PC-3 (cell line): ENCODE measurements at regions of chr12 and their contacts with region 1.

Region 1: DNA sequence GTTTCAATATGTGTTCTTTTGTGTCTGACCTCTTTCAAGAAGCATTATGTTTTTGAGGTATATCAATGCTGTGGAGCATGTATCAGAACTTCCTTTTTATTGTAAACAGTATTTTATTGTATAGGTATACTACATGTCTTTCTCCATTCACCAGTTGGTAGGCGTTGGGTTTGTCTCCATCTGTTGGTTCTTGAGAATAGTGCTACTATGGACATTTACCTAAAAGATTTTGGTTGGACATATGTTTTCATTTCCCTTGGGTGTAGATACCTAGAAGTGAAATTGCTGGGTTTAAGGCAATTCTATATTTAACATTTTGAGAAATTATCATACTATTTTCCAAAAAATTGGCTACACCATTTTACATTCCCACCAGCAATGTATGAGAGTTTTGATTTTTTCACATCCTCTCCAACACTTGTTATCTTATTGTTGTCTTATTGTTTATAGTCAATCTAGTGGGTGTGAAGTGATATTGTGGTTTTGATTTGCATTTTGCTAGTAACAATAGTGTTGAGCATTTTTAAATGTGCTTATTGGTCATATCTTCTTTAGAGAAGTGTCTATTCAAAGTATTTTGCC is 409.2 kb downstream of the IPO8 start:
- DNase-seq: peak; percentile 59
- ATAC-seq: 0 out of 2 replicates have a peak, but pooled peaks have one; percentile 37
- H3K4me3 ChIP-seq: no peak overlapping the region
- H3K27ac ChIP-seq: no peak overlapping the region
- H3K4me1 ChIP-seq: no peaks in the 10 kb centered on the region
- H3K27me3 ChIP-seq: no peaks in the 10 kb centered on the region
- CTCF ChIP-seq: peak; percentile 68

Region 2: DNA sequence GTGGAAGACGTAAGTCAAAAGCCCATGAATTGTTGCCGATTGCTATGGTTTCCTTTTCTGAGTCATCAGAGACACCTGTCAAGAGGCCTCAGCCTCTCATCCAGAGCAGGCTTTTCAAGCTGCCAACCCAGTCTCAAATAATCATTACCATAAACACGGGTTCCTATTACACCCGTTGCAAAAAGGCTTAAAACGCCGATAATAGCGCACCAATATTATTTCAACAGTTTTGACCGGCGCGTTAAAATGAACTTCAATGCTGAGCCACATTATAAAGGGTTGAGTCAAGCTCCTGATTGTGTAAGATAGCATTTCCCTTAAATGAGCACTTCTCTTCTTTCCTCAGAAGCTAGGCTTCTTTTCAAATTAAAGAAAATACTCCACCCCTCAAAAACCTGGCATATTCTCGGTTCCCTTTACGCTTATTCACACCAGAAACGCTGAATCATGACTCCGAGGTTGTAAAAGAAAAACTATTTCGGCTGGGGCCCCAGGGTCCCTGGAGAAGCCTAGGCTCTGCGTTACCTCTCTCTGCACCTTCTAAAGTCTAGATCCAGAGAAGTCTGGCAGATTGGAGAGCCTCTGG is 504.1 kb before region 1 on chr12:
- CTCF ChIA-PET with region 1: no interaction called
- POLR2A ChIA-PET with region 1: no interaction called
- intact Hi-C with region 1: loop called (anchors 10 kb)
- DNase-seq: peak; percentile 34
- ATAC-seq: no peak
- H3K4me3 ChIP-seq: peak overlapping the region; percentile 69; the same call in 1 of the 2 replicates
- H3K27ac ChIP-seq: no peak overlapping the region
- H3K4me1 ChIP-seq: no peaks in the 10 kb centered on the region
- H3K27me3 ChIP-seq: peaks cover 49% of the 10 kb centered on the region
- CTCF ChIP-seq: no peak

Region 3: DNA sequence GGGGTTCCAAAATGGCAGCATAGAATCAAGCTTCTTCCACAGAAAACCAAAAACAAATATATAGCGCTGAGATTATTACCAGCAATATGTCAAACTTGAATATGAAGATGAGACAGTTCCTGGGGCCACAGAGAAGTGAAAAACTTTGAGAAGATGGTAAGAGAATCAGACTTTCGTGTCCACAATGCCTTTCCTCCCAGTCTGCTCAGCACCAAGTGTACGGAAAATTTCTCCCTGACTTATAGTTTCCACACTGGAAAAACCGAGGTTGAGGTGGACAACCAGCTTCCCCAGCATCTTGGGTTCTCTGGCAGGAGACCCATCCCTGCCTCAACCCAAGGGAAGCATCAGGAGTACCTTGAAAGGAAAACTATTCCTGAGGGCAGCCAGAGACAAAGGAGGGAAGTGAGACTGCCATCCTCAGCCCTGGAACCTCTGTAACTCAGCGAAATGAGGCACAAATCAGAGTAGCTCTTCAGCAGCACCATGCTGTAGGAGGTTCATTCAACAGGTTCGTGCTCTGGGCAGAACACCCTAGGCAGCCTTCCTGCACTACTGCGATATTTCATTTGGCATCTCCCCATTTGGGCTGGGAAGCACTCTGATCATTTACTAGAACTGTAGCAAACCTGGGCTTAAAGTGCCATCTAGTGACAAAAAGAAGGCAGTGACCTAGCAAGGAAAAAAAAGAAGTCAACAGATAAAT is 520.7 kb after region 1 on chr12:
- CTCF ChIA-PET with region 1: no interaction called
- POLR2A ChIA-PET with region 1: no interaction called
- intact Hi-C with region 1: loop called (anchors 5 kb)
- DNase-seq: peak; percentile 80
- ATAC-seq: peak; percentile 93
- H3K4me3 ChIP-seq: peak overlapping the region; percentile 11; the same call in 1 of the 2 replicates
- H3K27ac ChIP-seq: no peak overlapping the region
- H3K4me1 ChIP-seq: peaks cover 14% of the 10 kb centered on the region
- H3K27me3 ChIP-seq: no peaks in the 10 kb centered on the region
- CTCF ChIP-seq: peak; percentile 81